ENCODE measurements at regions of chr16 and their contacts with region 1.

Region 1: DNA sequence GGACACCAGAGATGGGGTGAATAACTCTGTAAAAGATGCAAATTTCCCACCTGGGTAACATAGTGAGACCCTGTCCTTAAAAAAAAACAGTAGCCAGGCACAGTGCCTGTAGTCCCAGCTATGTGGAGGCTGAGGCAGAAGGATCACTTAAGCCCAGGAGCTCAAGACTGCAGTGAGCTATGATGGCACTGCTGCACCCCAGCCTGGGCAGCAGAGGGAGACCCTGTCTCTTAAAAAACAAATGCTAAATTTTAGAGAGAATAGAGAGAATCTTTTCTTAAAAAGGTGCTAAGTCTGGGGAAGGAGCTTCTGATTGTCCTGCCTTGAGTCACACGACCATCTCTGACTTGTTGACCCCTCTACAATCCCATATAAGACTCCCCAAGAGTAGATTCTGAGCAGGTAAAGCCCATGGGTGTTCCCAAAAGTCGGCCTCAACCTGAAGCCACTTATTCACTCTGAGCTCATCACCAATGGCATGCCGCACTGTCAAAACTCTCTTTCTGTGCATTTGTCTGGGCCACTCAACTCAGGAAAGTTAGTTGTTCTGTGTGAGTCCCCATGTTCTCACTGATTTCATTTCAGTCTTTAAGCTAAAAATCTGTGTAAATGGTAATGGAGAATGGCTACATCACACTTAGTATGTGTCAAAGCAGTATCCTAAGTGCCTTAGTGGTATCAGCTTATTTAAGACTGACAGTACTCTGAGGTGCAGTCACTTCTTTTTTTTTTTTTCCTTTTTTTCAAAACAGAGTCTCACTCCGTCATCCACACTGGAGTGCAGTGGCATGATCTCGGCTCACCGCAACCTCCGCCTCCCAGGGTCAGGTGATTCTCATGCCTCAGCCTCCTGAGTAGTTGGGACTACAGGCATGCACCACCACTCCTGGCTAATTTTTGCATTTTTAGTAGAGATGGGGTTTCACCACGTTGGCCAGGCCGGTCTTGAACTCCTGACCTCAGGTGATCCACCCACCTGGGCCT is 41.6 kb downstream of the PRKCB start:
- DNase-seq: peak; percentile 52
- H3K4me3 Mint-ChIP-seq: no peak overlapping the region
- H3K27ac Mint-ChIP-seq: peak overlapping the region; percentile 55
- H3K4me1 Mint-ChIP-seq: peaks cover 69% of the 10 kb centered on the region
- H3K27me3 Mint-ChIP-seq: no peaks in the 10 kb centered on the region

Region 2: GRCh38 chr16:23754594-23755483 is 122.6 kb before region 1 on chr16 and contains the start of gene CHP2:
- CTCF ChIA-PET with region 1: no interaction called
- intact Hi-C with region 1: no loop called
- DNase-seq: no peak
- H3K4me3 Mint-ChIP-seq: no peak within 1 kb of the TSS
- H3K27ac Mint-ChIP-seq: no peak within 1 kb of the TSS
- H3K4me1 Mint-ChIP-seq: peaks cover 4% of the 10 kb centered on the region
- H3K27me3 Mint-ChIP-seq: peaks cover 52% of the 10 kb centered on the region
- total RNA-seq, gene CHP2: not detected

Region 3: DNA sequence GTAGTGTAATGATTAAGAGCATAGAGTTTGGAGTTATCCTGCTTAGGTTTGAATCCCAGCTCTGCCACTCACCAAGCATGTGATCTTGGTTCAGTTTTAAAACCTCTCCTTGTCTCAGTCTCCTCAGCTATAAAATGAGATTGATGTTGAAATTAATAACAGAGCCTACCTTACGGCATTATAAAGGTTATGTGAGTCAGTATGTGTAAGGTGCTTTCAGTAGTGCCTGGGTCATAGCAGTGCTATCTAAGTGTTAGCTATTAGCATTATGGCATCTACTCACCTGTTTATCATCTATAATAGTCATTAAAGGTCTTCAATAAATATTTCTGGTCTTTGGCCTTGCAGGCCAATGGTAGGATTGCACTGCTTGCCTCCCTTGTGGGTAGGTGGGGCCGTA is 11.8 kb after region 1 on chr16:
- CTCF ChIA-PET with region 1: interaction called, 14 read pairs
- intact Hi-C with region 1: no loop called
- DNase-seq: no peak
- H3K4me3 Mint-ChIP-seq: no peak overlapping the region
- H3K27ac Mint-ChIP-seq: no peak overlapping the region
- H3K4me1 Mint-ChIP-seq: peaks cover 9% of the 10 kb centered on the region
- H3K27me3 Mint-ChIP-seq: no peaks in the 10 kb centered on the region